Sigmoid colon (tissue), 7 donors: ENCODE measurements at regions of chr3 and their contacts with region 1.

Region 1: DNA sequence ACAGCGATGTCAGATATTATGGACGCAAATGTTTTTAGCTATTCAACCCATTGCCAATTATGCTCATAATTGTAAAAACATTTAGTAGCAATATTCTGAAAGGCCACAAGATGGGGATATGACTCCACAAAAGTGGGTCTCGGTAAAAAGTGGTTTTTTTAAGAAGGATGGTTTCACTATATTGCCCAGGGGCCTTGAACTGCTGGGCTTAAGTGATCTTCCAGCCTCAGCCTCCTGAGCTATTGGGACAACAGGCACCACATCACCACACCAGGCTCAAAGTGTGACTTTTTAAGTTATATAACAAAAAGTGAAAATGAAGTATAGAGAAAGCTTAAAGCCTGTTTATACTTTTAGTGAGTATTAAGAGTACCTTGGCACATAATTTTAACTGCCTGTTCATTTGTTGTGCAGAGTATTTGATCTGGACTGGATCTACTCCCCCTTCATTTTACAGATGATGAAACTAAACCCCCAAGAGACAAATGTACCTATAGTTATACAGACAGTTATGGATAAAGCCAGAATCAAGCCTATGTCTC is 9.4 kb downstream of the NAA50 start:
- DNase-seq: no peak
- H3K4me3 ChIP-seq: no peak overlapping the region
- H3K27ac ChIP-seq: peak overlapping the region in 2 of 4 donors; percentile 20 to 47
- H3K4me1 ChIP-seq: peaks cover 0 to 56% (median 27%) of the 10 kb centered on the region in 4 donors
- H3K27me3 ChIP-seq: no peaks in the 10 kb centered on the region
- CTCF ChIP-seq: peak; percentile 30 to 68 (median 63)
- EP300 ChIP-seq: no peak
- POLR2A ChIP-seq: no peak

Region 2: GRCh38 chr3:113783463-113783862 is 46.8 kb after region 1 on chr3:
- intact Hi-C with region 1: no loop called
- DNase-seq: no peak
- H3K4me3 ChIP-seq: no peak overlapping the region
- H3K27ac ChIP-seq: peak overlapping the region in 1 of 4 donors; percentile 34
- H3K4me1 ChIP-seq: peaks cover 0 to 7% (median 0%) of the 10 kb centered on the region in 4 donors
- H3K27me3 ChIP-seq: no peaks in the 10 kb centered on the region
- CTCF ChIP-seq: no peak
- EP300 ChIP-seq: no peak
- POLR2A ChIP-seq: no peak

Region 3: GRCh38 chr3:113795693-113796092 is 59.1 kb after region 1 on chr3:
- intact Hi-C with region 1: loop called (anchors 10 kb)
- DNase-seq: no peak
- H3K4me3 ChIP-seq: no peak overlapping the region
- H3K27ac ChIP-seq: no peak overlapping the region
- H3K4me1 ChIP-seq: no peaks in the 10 kb centered on the region
- H3K27me3 ChIP-seq: no peaks in the 10 kb centered on the region
- CTCF ChIP-seq: no peak
- EP300 ChIP-seq: no peak
- POLR2A ChIP-seq: no peak

Region 4: GRCh38 chr3:113838631-113839209 is 102.1 kb after region 1 on chr3 and contains the start of gene GRAMD1C:
- intact Hi-C with region 1: loop called (anchors 2 kb)
- DNase-seq: peak; percentile 91
- H3K4me3 ChIP-seq: peak within 1 kb of the TSS; percentile 10 to 53 (median 49)
- H3K27ac ChIP-seq: peak within 1 kb of the TSS in 2 of 4 donors; percentile 22 to 42
- H3K4me1 ChIP-seq: peaks cover 0 to 9% (median 0%) of the 10 kb centered on the region in 4 donors
- H3K27me3 ChIP-seq: no peaks in the 10 kb centered on the region
- CTCF ChIP-seq: peak; percentile 42 to 77 (median 56)
- EP300 ChIP-seq: no peak
- POLR2A ChIP-seq: no peak
- total RNA-seq, gene GRAMD1C: 0.27 to 3.6 (median 0.95) TPM